Activated naive CD4-positive, alpha-beta T cell treated with anti-CD3 and anti-CD28 coated beads for 36 hours (primary cell): ENCODE measurements at regions of chr12 and their contacts with region 1.

Region 1: GRCh38 chr12:96061864-96062453 is 26.6 kb upstream of the LTA4H start:
- DNase-seq: peak; percentile 90
- H3K4me3 Mint-ChIP-seq: no peak overlapping the region
- H3K27ac Mint-ChIP-seq: no peak overlapping the region
- H3K4me1 Mint-ChIP-seq: peaks cover 25% of the 10 kb centered on the region
- H3K27me3 Mint-ChIP-seq: no peaks in the 10 kb centered on the region

Region 2: GRCh38 chr12:95918194-95918993 is 143.6 kb before region 1 on chr12:
- CTCF ChIA-PET with region 1: no interaction called
- intact Hi-C with region 1: loop called (anchors 1 kb)
- DNase-seq: peak; percentile 65
- H3K4me3 Mint-ChIP-seq: no peak overlapping the region
- H3K27ac Mint-ChIP-seq: no peak overlapping the region
- H3K4me1 Mint-ChIP-seq: no peaks in the 10 kb centered on the region
- H3K27me3 Mint-ChIP-seq: peaks cover 2% of the 10 kb centered on the region

Region 3: DNA sequence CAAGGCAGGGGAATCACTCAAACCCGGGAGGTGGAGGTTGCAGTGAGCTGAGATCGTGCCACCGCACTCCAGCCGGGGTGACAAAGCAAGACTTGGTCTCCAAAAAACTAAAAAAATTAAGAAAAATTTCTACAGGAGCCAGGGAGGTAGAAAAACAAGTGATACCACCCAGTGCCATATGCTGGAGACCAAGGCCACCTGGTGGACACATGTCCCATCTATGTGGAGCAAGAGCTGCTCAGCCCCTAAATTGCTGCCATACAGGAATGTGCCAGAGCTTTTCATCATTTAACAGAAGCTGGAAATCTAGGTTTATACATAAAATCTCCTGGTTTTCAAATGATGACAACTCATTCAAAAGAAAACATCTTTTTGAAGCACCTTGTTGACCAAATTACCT is 70.9 kb after region 1 on chr12:
- CTCF ChIA-PET with region 1: interaction called, 5 read pairs
- intact Hi-C with region 1: loop called (anchors 1 kb)
- DNase-seq: peak; percentile 27
- H3K4me3 Mint-ChIP-seq: no peak overlapping the region
- H3K27ac Mint-ChIP-seq: no peak overlapping the region
- H3K4me1 Mint-ChIP-seq: peaks cover 27% of the 10 kb centered on the region
- H3K27me3 Mint-ChIP-seq: no peaks in the 10 kb centered on the region

Region 4: GRCh38 chr12:96327346-96327745 is 265.4 kb after region 1 on chr12:
- CTCF ChIA-PET with region 1: no interaction called
- intact Hi-C with region 1: loop called (anchors 5 kb)
- DNase-seq: no peak
- H3K4me3 Mint-ChIP-seq: no peak overlapping the region
- H3K27ac Mint-ChIP-seq: peak overlapping the region; percentile 65
- H3K4me1 Mint-ChIP-seq: peaks cover 49% of the 10 kb centered on the region
- H3K27me3 Mint-ChIP-seq: no peaks in the 10 kb centered on the region

Region 5: GRCh38 chr12:96501139-96501761 is 439.3 kb after region 1 on chr12:
- CTCF ChIA-PET with region 1: no interaction called
- intact Hi-C with region 1: loop called (anchors 1 kb)
- DNase-seq: peak; percentile 44
- H3K4me3 Mint-ChIP-seq: no peak overlapping the region
- H3K27ac Mint-ChIP-seq: peak overlapping the region; percentile 74
- H3K4me1 Mint-ChIP-seq: peaks cover 31% of the 10 kb centered on the region
- H3K27me3 Mint-ChIP-seq: no peaks in the 10 kb centered on the region

Region 6: DNA sequence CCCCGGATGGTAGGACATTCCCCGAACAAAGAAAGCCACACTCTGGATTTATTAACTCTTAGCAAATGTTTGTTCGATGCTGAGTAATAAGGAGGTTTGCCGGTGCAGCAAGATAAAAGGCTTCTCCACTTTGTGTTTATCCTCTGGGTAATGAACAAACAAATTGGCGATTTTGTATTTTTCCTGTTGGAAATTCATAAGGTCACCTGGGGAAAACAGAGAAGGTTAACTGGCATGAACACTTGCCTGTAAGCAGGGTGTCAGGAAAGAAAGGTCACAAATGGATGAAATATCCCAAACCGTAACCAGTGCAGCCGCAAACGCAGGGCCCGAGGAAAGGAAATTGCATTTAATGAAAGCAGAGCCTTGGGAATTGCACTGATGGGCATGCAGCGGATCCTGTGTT is 1533.5 kb after region 1 on chr12:
- CTCF ChIA-PET with region 1: no interaction called
- intact Hi-C with region 1: no loop called
- DNase-seq: no peak
- H3K4me3 Mint-ChIP-seq: no peak overlapping the region
- H3K27ac Mint-ChIP-seq: no peak overlapping the region
- H3K4me1 Mint-ChIP-seq: no peaks in the 10 kb centered on the region
- H3K27me3 Mint-ChIP-seq: no peaks in the 10 kb centered on the region